ENCODE measurements at regions of chr13 and their contacts with region 1.

Region 1: GRCh38 chr13:52194184-52194868 is 34.9 kb upstream of the NEK3 start:
- DNase-seq: peak; percentile 91 to 94
- H3K4me3 ChIP-seq: peak overlapping the region; percentile 85
- H3K4me3 Mint-ChIP-seq: peak overlapping the region; percentile 94
- H3K27ac Mint-ChIP-seq: peak overlapping the region; percentile 88
- H3K4me1 ChIP-seq: peaks cover 6% of the 10 kb centered on the region; the same call in 1 of the 2 replicates
- H3K4me1 Mint-ChIP-seq: peaks cover 9% of the 10 kb centered on the region
- H3K27me3 ChIP-seq: no peaks in the 10 kb centered on the region
- H3K27me3 Mint-ChIP-seq: no peaks in the 10 kb centered on the region
- CTCF ChIP-seq: no peak

Region 2: GRCh38 chr13:51286135-51287002 is 908.0 kb before region 1 on chr13:
- CTCF ChIA-PET with region 1: no interaction called
- POLR2A ChIA-PET with region 1: no interaction called
- intact Hi-C with region 1: no loop called
- DNase-seq: peak; percentile 77 to 87
- H3K4me3 ChIP-seq: no peak overlapping the region
- H3K4me3 Mint-ChIP-seq: no peak overlapping the region
- H3K27ac Mint-ChIP-seq: no peak overlapping the region
- H3K4me1 ChIP-seq: no peaks in the 10 kb centered on the region
- H3K4me1 Mint-ChIP-seq: peaks cover 7% of the 10 kb centered on the region
- H3K27me3 ChIP-seq: no peaks in the 10 kb centered on the region
- H3K27me3 Mint-ChIP-seq: no peaks in the 10 kb centered on the region
- CTCF ChIP-seq: peak; percentile 91 to 97

Region 3: GRCh38 chr13:52159321-52160086 is 34.8 kb before region 1 on chr13 and contains the start of gene NEK3:
- CTCF ChIA-PET with region 1: interaction called, 5 read pairs
- POLR2A ChIA-PET with region 1: no interaction called
- intact Hi-C with region 1: loop called (anchors 2 kb)
- DNase-seq: peak; percentile 79 to 82
- H3K4me3 ChIP-seq: peak within 1 kb of the TSS; percentile 91
- H3K4me3 Mint-ChIP-seq: peak within 1 kb of the TSS; percentile 76
- H3K27ac Mint-ChIP-seq: peak within 1 kb of the TSS; percentile 79
- H3K4me1 ChIP-seq: peaks cover 54% of the 10 kb centered on the region
- H3K4me1 Mint-ChIP-seq: peaks cover 54% of the 10 kb centered on the region
- H3K27me3 ChIP-seq: no peaks in the 10 kb centered on the region
- H3K27me3 Mint-ChIP-seq: no peaks in the 10 kb centered on the region
- CTCF ChIP-seq: no peak
- total RNA-seq, gene NEK3: 23.2 and 33.5 TPM in 2 replicates